ENCODE measurements at regions of chr14 and their contacts with region 1.

Region 1: DNA sequence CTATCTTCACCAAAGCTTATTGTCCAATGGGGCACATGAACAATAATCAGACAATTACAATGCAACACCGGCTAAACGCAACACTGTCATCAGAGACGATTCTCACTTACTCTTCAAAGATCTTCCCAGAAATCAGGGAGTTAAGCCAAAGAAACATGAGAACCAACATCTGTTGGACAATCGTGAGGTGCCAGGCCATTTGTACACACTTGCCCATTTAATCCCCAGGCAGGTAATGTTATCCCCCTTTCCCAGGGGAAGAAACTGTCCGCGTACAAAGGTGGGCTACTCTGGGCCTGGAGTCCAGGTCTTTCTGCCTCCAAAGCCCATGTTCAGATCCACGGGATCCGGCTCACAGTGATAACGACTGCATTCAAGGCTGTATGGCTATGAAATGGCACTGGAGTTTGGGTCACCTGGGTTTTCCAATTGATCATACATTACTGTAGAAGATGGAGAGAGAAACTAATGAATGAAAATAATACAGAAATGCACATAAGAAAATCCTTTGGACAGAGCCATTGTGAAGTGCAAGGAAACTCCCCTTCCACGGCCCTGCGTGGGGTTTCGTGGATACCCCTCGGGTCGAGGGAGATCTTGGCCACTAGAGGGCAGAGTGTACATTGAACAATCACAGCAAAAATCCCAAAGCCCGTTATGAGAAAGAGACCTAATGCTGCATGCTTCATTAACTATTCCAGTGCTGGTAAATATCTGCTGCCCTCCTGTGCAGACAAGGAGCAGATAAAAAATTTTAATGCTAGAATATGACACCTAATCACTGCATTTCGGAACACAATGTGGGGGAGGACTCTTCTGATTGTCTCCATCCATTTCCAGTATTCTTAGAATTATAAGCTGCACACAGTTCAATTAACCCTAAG is 111.4 kb downstream of the EGLN3 start:
- DNase-seq: peak in 5 of 6 donors; percentile 21 to 64 (median 45)
- ATAC-seq: peak; percentile 80 to 96 (median 92)
- H3K4me3 ChIP-seq: no peak overlapping the region
- H3K27ac ChIP-seq: no peak overlapping the region
- H3K4me1 ChIP-seq: peaks cover 0 to 5% (median 0%) of the 10 kb centered on the region in 3 donors
- H3K27me3 ChIP-seq: no peaks in the 10 kb centered on the region
- CTCF ChIP-seq: peak; percentile 58 to 81 (median 76)

Region 2: GRCh38 chr14:34227834-34228649 is 388.6 kb after region 1 on chr14:
- intact Hi-C with region 1: loop called in 2 of 3 experiments (anchors 10 kb)
- DNase-seq: peak; percentile 23 to 77 (median 59)
- ATAC-seq: peak; percentile 91 to 99 (median 98)
- H3K4me3 ChIP-seq: no peak overlapping the region
- H3K27ac ChIP-seq: no peak overlapping the region
- H3K4me1 ChIP-seq: peaks cover 0 to 3% (median 0%) of the 10 kb centered on the region in 3 donors
- H3K27me3 ChIP-seq: no peaks in the 10 kb centered on the region
- CTCF ChIP-seq: peak; percentile 50 to 72 (median 60)